ENCODE measurements at regions of chr2 and their contacts with region 1.

Region 1: GRCh38 chr2:169131587-169132512 is 62.5 kb downstream of the DHRS9 start:
- DNase-seq: peak; percentile 51
- H3K4me3 ChIP-seq: no peak overlapping the region; a peak in 1 of 4 replicates
- H3K27ac ChIP-seq: no peak overlapping the region
- H3K4me1 ChIP-seq: no peaks in the 10 kb centered on the region
- H3K27me3 ChIP-seq: peaks cover 3% of the 10 kb centered on the region; the same call in 1 of the 2 replicates
- CTCF ChIP-seq: peak; percentile 81
- EP300 ChIP-seq: no peak
- RAD21 ChIP-seq: peak; percentile 51

Region 2: DNA sequence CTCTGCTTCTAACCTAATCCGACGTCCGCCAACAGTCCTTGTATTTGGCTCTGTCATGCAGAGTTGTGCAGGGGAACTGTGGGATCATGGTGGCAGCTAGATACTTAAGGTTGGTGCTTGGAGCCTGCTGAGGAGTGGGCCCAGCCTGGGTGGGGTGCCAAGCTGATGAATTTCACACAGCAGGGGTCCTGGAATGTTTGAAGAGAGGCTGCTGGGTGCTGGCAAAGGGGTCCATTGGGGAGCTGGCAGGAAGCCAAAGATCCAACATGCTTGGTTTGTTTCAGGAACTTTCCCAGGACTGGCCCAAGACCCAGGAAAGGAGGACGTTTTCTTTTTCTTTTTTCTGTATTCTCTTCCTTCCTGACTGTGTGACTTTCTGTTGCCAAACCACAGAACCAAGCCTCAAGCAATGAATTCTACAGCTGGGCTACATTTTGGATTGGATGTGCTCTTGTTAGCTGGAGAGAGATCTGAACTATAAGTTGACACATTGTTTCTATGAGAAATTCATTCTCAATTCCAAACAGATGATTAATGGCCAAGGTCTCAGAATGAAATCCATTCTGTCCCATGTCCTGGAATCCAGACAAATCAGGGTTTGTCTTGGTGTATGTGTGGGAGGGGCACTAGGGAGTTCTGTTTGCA is 12.6 kb before region 1 on chr2:
- CTCF ChIA-PET with region 1: interaction called, 19 read pairs
- POLR2A ChIA-PET with region 1: no interaction called
- DNase-seq: no peak
- H3K4me3 ChIP-seq: no peak overlapping the region
- H3K27ac ChIP-seq: no peak overlapping the region
- H3K4me1 ChIP-seq: no peaks in the 10 kb centered on the region
- H3K27me3 ChIP-seq: no peaks in the 10 kb centered on the region
- CTCF ChIP-seq: no peak
- EP300 ChIP-seq: no peak
- RAD21 ChIP-seq: no peak

Region 3: DNA sequence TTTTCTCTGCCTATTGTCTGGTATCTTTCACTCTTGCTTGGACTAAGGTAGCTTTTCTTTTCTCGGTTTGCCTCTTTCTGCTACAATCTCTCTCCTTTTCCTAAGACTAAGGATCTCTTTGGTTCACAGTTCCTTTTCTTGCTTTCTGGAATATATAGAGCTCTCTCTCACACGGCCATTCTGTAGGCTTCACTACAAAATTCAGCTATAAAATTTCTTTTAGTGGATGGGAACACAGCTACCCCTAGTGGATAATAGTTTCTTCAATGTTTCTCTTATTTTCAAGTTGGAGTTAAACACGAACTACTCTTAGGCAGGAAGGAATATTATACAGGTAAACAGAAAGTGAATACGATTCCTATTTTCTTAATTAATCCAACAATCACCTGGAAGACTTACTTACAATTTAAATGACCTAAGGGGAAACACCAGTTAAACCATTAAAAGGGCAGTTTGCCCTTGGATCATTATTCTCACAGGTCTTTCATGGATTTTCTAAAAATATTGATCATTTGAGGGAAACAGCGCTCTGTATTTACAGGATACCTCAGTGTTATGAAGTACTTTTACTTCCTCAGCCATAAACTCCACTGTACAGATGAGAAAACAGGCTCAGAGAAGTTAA is 90.0 kb after region 1 on chr2:
- CTCF ChIA-PET with region 1: interaction called, 10 read pairs
- POLR2A ChIA-PET with region 1: no interaction called
- DNase-seq: peak; percentile 14
- H3K4me3 ChIP-seq: peak overlapping the region in 1 of 2 experiments; percentile 16; a peak in 1 of 4 replicates
- H3K27ac ChIP-seq: no peak overlapping the region
- H3K4me1 ChIP-seq: no peaks in the 10 kb centered on the region
- H3K27me3 ChIP-seq: no peaks in the 10 kb centered on the region
- CTCF ChIP-seq: peak; percentile 60
- EP300 ChIP-seq: no peak
- RAD21 ChIP-seq: peak; percentile 55

Measured in SK-N-SH (cell line).